ENCODE measurements at regions of chr4 and their contacts with region 1.

Region 1: GRCh38 chr4:139619644-139620043 is 46.0 kb upstream of the MGST2 start:
- DNase-seq: no peak
- ATAC-seq: peak; percentile 66
- H3K4me3 ChIP-seq: no peak overlapping the region
- H3K27ac ChIP-seq: no peak overlapping the region
- H3K4me1 ChIP-seq: no peaks in the 10 kb centered on the region
- H3K27me3 ChIP-seq: peaks cover 16% of the 10 kb centered on the region
- CTCF ChIP-seq: peak; percentile 38
- POLR2A ChIP-seq: no peak
- RAD21 ChIP-seq: peak; percentile 41

Region 2: GRCh38 chr4:139603576-139604387 is 15.9 kb before region 1 on chr4:
- CTCF ChIA-PET with region 1: interaction called, 12 read pairs
- POLR2A ChIA-PET with region 1: no interaction called
- dilution Hi-C with region 1: no loop called
- in situ Hi-C with region 1: no loop called
- intact Hi-C with region 1: no loop called
- DNase-seq: peak; percentile 59
- ATAC-seq: peak; percentile 43
- H3K4me3 ChIP-seq: no peak overlapping the region
- H3K27ac ChIP-seq: no peak overlapping the region
- H3K4me1 ChIP-seq: peaks cover 5% of the 10 kb centered on the region; the same call in 1 of the 2 replicates
- H3K27me3 ChIP-seq: peaks cover 14% of the 10 kb centered on the region
- CTCF ChIP-seq: peak; percentile 60
- POLR2A ChIP-seq: no peak
- RAD21 ChIP-seq: peak; percentile 69

Region 3: DNA sequence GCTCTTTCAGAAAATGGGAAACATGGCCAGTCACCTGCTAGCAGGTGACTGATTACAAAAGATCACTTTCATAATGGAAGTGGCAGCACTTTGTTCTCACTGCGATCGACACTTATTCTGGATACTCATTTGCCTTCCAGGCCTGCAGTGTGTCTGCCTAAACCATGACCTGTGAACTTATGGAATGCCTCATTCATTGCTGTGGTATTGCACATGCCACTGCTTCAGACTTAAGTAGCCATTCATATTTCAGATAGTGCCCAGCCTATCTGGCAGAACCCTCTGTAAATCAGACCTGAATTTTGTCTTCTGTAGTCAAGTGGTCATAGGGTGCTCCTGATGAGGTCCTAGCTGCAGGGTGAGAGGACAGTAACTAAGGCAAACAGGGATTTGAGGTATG is 22.7 kb after region 1 on chr4:
- CTCF ChIA-PET with region 1: interaction called, 3 read pairs
- POLR2A ChIA-PET with region 1: no interaction called
- dilution Hi-C with region 1: no loop called
- in situ Hi-C with region 1: no loop called
- intact Hi-C with region 1: loop called (anchors 2 kb)
- DNase-seq: peak; percentile 75
- ATAC-seq: peak; percentile 94
- H3K4me3 ChIP-seq: no peak overlapping the region
- H3K27ac ChIP-seq: no peak overlapping the region
- H3K4me1 ChIP-seq: peaks cover 2% of the 10 kb centered on the region; the same call in 1 of the 2 replicates
- H3K27me3 ChIP-seq: peaks cover 1% of the 10 kb centered on the region; the same call in 1 of the 2 replicates
- CTCF ChIP-seq: no peak
- POLR2A ChIP-seq: no peak
- RAD21 ChIP-seq: no peak